Mammary epithelial cell (primary cell): ENCODE measurements at regions of chr4 and their contacts with region 1.

Region 1: DNA sequence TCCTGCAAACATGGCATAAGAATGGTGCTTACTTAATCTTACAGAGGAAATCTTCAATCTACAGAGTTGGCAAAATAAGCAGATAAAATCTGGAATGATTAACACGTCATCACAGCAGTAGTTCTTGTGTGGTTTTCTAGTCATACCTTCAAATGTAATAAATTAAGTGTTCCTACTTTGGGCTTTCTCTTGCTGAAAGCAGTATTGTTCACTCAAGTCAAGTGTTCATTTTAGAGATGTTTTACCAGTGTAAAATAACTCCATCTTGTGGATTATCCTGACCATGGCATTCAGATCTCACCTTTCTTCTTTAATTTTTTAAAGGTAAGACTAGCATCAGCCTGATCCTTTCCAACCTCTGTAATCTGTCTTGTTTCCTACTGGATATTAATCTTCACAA is 72.9 kb downstream of the ADAMTS3 start:
- DNase-seq: peak; percentile 78
- H3K4me3 ChIP-seq: no peak overlapping the region
- H3K27ac ChIP-seq: no peak overlapping the region
- H3K4me1 ChIP-seq: no peaks in the 10 kb centered on the region
- H3K27me3 ChIP-seq: no peaks in the 10 kb centered on the region
- CTCF ChIP-seq: peak; percentile 42 to 51

Region 2: GRCh38 chr4:71772592-71772991 is 723.5 kb before region 1 on chr4:
- CTCF ChIA-PET with region 1: no interaction called
- dilution Hi-C with region 1: no loop called
- in situ Hi-C with region 1: loop called in 1 of 2 experiments (anchors 25 kb)
- intact Hi-C with region 1: no loop called
- DNase-seq: no peak
- H3K4me3 ChIP-seq: no peak overlapping the region
- H3K27ac ChIP-seq: no peak overlapping the region
- H3K4me1 ChIP-seq: no peaks in the 10 kb centered on the region
- H3K27me3 ChIP-seq: no peaks in the 10 kb centered on the region
- CTCF ChIP-seq: peak; percentile 20 to 34

Region 3: DNA sequence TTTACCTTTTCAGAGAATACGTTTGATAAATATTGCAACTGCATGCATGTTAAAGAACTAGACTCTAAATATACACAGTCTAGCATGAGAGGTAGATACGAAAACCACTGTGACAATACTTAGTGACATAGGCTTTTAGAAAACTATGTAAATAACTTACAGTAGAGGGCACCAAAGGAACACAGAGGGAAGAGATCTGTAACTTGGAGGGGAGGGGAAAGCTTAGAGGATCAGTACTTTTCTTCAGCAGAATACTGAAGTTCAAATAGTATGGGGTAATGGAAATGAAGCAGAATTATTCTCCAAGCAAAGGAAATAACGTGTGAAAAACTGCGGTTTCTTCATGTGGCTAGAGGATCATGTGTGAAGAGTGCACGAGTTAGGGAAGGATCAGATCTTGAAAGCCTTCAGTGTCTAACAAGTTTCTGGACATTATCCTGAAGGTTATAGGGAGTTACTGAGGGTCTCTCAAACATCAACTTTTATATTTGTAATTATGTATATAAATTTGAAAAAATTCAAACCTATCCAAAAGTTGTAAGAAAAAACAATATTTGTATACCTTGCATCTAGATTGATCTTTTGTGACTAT is 200.1 kb before region 1 on chr4:
- CTCF ChIA-PET with region 1: interaction called, 5 read pairs
- dilution Hi-C with region 1: no loop called
- in situ Hi-C with region 1: no loop called
- intact Hi-C with region 1: loop called (anchors 1 kb)
- DNase-seq: peak; percentile 34
- H3K4me3 ChIP-seq: no peak overlapping the region
- H3K27ac ChIP-seq: no peak overlapping the region
- H3K4me1 ChIP-seq: no peaks in the 10 kb centered on the region
- H3K27me3 ChIP-seq: no peaks in the 10 kb centered on the region
- CTCF ChIP-seq: peak; percentile 54 to 79

Region 4: GRCh38 chr4:72326692-72327632 is 169.2 kb before region 1 on chr4:
- CTCF ChIA-PET with region 1: interaction called, 3 read pairs
- dilution Hi-C with region 1: no loop called
- in situ Hi-C with region 1: no loop called
- intact Hi-C with region 1: loop called (anchors 1 kb)
- DNase-seq: no peak
- H3K4me3 ChIP-seq: no peak overlapping the region
- H3K27ac ChIP-seq: no peak overlapping the region
- H3K4me1 ChIP-seq: peaks cover 5% of the 10 kb centered on the region
- H3K27me3 ChIP-seq: no peaks in the 10 kb centered on the region
- CTCF ChIP-seq: peak; percentile 41 to 66

Region 5: DNA sequence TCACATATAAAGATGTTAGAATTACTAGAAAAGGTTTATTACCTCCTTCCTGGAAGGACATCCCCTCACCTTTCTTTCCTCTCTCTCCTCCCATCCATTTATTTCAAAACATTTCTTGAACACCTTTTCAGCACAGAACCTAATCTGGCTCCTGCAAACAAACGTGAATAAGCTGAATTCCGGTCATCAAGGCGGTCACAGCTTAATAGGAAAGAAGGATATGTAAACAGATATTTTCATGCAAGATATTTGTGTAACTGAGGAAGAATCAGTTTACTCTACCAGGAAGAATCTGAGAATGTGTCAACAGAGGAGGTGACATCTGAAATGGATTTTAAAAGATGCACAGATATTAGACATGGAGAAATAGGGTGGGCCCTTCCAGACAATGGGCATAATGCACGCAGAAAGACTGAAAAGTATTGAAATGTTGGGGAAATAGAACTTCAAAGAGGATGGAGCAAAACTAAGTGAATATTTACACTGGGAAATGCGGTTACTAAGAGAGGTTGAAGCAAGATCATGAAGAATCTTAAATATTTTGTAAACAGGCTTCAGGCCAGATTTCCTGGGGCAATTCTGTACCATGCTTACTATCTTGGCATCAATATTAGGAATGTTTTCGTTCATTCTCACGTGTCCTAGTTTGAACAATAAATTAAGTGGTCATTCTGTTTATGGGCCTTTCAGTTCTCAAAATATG is 143.6 kb before region 1 on chr4:
- CTCF ChIA-PET with region 1: no interaction called
- dilution Hi-C with region 1: no loop called
- in situ Hi-C with region 1: no loop called
- intact Hi-C with region 1: no loop called
- DNase-seq: peak; percentile 14
- H3K4me3 ChIP-seq: no peak overlapping the region
- H3K27ac ChIP-seq: no peak overlapping the region
- H3K4me1 ChIP-seq: peaks cover 2% of the 10 kb centered on the region
- H3K27me3 ChIP-seq: no peaks in the 10 kb centered on the region
- CTCF ChIP-seq: no peak